Activated B cell treated with CpG ODN at 0.5 μM for 24 hours (primary cell): ENCODE measurements at regions of chr5 and their contacts with region 1.

Region 1: DNA sequence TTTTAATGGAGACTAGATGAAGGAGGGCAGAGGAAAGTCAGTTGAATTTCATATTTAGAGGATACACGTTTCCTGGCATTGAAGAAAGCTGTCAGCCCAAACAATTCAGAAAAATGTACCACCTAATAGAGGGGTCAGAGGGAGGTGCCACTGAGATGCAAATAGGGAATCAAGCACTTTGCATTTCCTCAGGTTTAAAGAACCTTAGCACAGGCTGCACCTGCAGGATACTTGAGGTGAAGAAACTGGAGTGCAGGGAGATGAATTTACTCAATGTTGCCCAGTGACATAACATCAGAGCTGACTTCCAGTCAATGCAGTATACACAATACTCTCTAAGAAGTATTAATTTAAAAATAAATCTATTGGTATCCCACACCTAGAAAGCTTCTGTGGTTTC is 67.0 kb upstream of the MAST4 start:
- DNase-seq: no peak
- ATAC-seq: no peak
- H3K4me3 Mint-ChIP-seq: no peak overlapping the region
- H3K27ac Mint-ChIP-seq: no peak overlapping the region
- H3K4me1 Mint-ChIP-seq: peaks cover 5% of the 10 kb centered on the region
- H3K27me3 Mint-ChIP-seq: no peaks in the 10 kb centered on the region
- CTCF ChIP-seq: no peak

Region 2: GRCh38 chr5:66518716-66519171 is 10.4 kb before region 1 on chr5:
- CTCF ChIA-PET with region 1: no interaction called
- POLR2A ChIA-PET with region 1: interaction called, 3 read pairs
- intact Hi-C with region 1: loop called (anchors 1 kb)
- DNase-seq: no peak
- ATAC-seq: no peak
- H3K4me3 Mint-ChIP-seq: no peak overlapping the region
- H3K27ac Mint-ChIP-seq: no peak overlapping the region
- H3K4me1 Mint-ChIP-seq: peaks cover 39% of the 10 kb centered on the region
- H3K27me3 Mint-ChIP-seq: no peaks in the 10 kb centered on the region
- CTCF ChIP-seq: no peak

Region 3: GRCh38 chr5:66595756-66596635 is 66.8 kb after region 1 on chr5 and contains the start of gene MAST4:
- CTCF ChIA-PET with region 1: no interaction called
- POLR2A ChIA-PET with region 1: no interaction called
- intact Hi-C with region 1: no loop called
- DNase-seq: peak; percentile 79
- ATAC-seq: peak; percentile 96
- H3K4me3 Mint-ChIP-seq: peak within 1 kb of the TSS; percentile 83
- H3K27ac Mint-ChIP-seq: no peak within 1 kb of the TSS
- H3K4me1 Mint-ChIP-seq: peaks cover 22% of the 10 kb centered on the region
- H3K27me3 Mint-ChIP-seq: peaks cover 32% of the 10 kb centered on the region
- CTCF ChIP-seq: no peak
- total RNA-seq, gene MAST4: 10.3 and 17.2 TPM in 2 replicates

Region 4: GRCh38 chr5:66633795-66634194 is 104.6 kb after region 1 on chr5:
- CTCF ChIA-PET with region 1: no interaction called
- POLR2A ChIA-PET with region 1: no interaction called
- intact Hi-C with region 1: no loop called
- DNase-seq: no peak
- ATAC-seq: no peak
- H3K4me3 Mint-ChIP-seq: no peak overlapping the region
- H3K27ac Mint-ChIP-seq: no peak overlapping the region
- H3K4me1 Mint-ChIP-seq: peaks cover under 1% of the 10 kb centered on the region
- H3K27me3 Mint-ChIP-seq: no peaks in the 10 kb centered on the region
- CTCF ChIP-seq: no peak

Region 5: GRCh38 chr5:66814146-66814991 is 285.2 kb after region 1 on chr5:
- CTCF ChIA-PET with region 1: no interaction called
- POLR2A ChIA-PET with region 1: no interaction called
- intact Hi-C with region 1: no loop called
- DNase-seq: no peak
- ATAC-seq: no peak
- H3K4me3 Mint-ChIP-seq: no peak overlapping the region
- H3K27ac Mint-ChIP-seq: no peak overlapping the region
- H3K4me1 Mint-ChIP-seq: peaks cover 11% of the 10 kb centered on the region
- H3K27me3 Mint-ChIP-seq: peaks cover 5% of the 10 kb centered on the region
- CTCF ChIP-seq: no peak